ENCODE measurements at regions of chr1 and their contacts with region 1.

Region 1: GRCh38 chr1:223748773-223749733 is 36.7 kb downstream of the CAPN2 start:
- DNase-seq: peak; percentile 54 to 67
- ATAC-seq: peak; percentile 61 to 83
- H3K4me3 ChIP-seq: peak overlapping the region; percentile 18; the same call in 2 of the 3 replicates
- H3K27ac ChIP-seq: peak overlapping the region; percentile 80 to 81
- H3K4me1 ChIP-seq: peaks cover 36% of the 10 kb centered on the region
- CTCF ChIP-seq: peak; percentile 95
- EP300 ChIP-seq: no peak
- POLR2A ChIP-seq: no peak
- RAD21 ChIP-seq: peak; percentile 68 to 91

Region 2: GRCh38 chr1:223695941-223696340 is 53.1 kb before region 1 on chr1:
- CTCF ChIA-PET with region 1: interaction called, 122 read pairs
- POLR2A ChIA-PET with region 1: interaction called, 6 read pairs
- DNase-seq: no peak
- ATAC-seq: no peak
- H3K4me3 ChIP-seq: no peak overlapping the region
- H3K27ac ChIP-seq: no peak overlapping the region
- H3K4me1 ChIP-seq: peaks cover 26% of the 10 kb centered on the region
- CTCF ChIP-seq: no peak
- EP300 ChIP-seq: no peak
- POLR2A ChIP-seq: no peak
- RAD21 ChIP-seq: no peak

Region 3: GRCh38 chr1:223712194-223712849 is 36.7 kb before region 1 on chr1 and contains the start of gene CAPN2:
- CTCF ChIA-PET with region 1: interaction called, 92 read pairs
- POLR2A ChIA-PET with region 1: interaction called, 14 read pairs
- DNase-seq: peak; percentile 81 to 84
- ATAC-seq: peak; percentile 71 to 75
- H3K4me3 ChIP-seq: peak within 1 kb of the TSS; percentile 88
- H3K27ac ChIP-seq: peak within 1 kb of the TSS; percentile 99
- H3K4me1 ChIP-seq: peaks cover 80% of the 10 kb centered on the region
- CTCF ChIP-seq: peak; percentile 70
- EP300 ChIP-seq: no peak
- POLR2A ChIP-seq: peak; percentile 71
- RAD21 ChIP-seq: peak; percentile 57 to 88
- polyA plus RNA-seq, gene CAPN2: 199 and 217 TPM in 2 replicates

Region 4: GRCh38 chr1:223738465-223739365 is 10.3 kb before region 1 on chr1:
- CTCF ChIA-PET with region 1: interaction called, 100 read pairs
- POLR2A ChIA-PET with region 1: no interaction called
- DNase-seq: no peak
- ATAC-seq: peak in 1 of 2 experiments; percentile 22; a peak in 3 of 6 replicates
- H3K4me3 ChIP-seq: no peak overlapping the region
- H3K27ac ChIP-seq: peak overlapping the region; percentile 66 to 68; a peak in 4 of 6 replicates
- H3K4me1 ChIP-seq: peaks cover 84% of the 10 kb centered on the region
- CTCF ChIP-seq: no peak
- EP300 ChIP-seq: no peak
- POLR2A ChIP-seq: no peak
- RAD21 ChIP-seq: no peak

Region 5: GRCh38 chr1:223771814-223772770 is 23.0 kb after region 1 on chr1:
- CTCF ChIA-PET with region 1: interaction called, 99 read pairs
- POLR2A ChIA-PET with region 1: no interaction called
- DNase-seq: peak; percentile 58 to 75
- ATAC-seq: peak; percentile 78 to 84
- H3K4me3 ChIP-seq: no peak overlapping the region
- H3K27ac ChIP-seq: peak overlapping the region; percentile 79 to 89
- H3K4me1 ChIP-seq: peaks cover 70% of the 10 kb centered on the region
- CTCF ChIP-seq: no peak
- EP300 ChIP-seq: no peak
- POLR2A ChIP-seq: no peak
- RAD21 ChIP-seq: no peak